Tibial artery (tissue), 4 donors: ENCODE measurements at regions of chr4 and their contacts with region 1.

Region 1: DNA sequence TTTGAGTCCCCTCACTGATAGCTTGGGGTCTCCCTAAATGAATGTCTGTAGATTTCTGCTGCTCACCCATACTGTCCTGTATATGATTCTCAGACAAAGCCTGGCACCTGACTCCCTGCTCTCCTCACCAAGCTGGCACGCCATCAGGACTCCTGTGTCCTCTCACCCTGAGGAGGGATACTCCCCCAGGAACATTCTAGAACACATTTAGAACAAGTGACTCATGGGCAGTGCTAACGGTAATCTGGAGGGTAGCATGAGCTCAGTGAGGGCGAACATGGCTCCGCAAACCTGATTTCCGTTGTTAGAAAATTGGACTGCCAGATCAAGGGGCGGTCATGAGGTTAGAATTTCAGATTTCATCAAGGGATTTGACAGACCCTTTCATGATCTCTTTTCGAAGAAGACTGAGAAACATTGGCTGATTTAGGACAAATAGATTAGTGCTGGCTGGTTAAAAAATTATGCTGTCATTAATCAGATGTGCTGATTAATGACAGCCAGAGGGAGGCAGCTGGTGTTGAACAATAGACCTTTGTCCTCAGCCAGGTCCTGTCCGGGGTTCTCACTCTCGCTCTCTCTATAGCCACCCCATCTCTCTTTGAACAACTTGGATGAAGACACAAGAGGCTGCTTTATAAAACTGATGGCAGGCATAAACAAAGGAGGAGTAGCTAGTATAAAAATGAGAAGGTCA is 244.3 kb downstream of the PTTG2 start:
- DNase-seq: no peak
- H3K4me3 ChIP-seq: no peak overlapping the region
- H3K27ac ChIP-seq: peak overlapping the region in 1 of 2 donors; percentile 48
- H3K4me1 ChIP-seq: peaks cover 0 to 16% (median 0%) of the 10 kb centered on the region in 4 donors
- H3K27me3 ChIP-seq: no peaks in the 10 kb centered on the region
- CTCF ChIP-seq: no peak

Region 2: DNA sequence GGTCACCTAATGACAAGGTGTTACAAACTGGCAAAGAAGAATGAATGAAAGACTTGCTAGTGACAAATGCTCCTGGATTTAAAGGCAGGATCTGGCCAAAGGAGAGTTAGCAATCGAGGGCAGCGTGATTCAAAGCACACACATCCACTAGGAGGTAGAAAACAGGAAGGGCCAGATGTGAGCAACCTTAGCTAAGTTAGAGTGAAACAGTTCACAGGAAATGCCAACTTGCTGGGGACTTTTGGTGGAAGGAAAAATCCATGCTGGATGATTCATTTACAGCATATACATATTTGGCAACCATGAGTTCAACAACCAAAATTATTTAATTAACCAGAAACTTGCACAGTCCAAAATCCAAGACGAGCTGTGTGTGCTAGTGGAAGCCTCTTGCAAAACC is 32.7 kb after region 1 on chr4:
- intact Hi-C with region 1: loop called (anchors 2 kb)
- DNase-seq: no peak
- H3K4me3 ChIP-seq: no peak overlapping the region
- H3K27ac ChIP-seq: no peak overlapping the region
- H3K4me1 ChIP-seq: peaks cover 0 to 24% (median 5%) of the 10 kb centered on the region in 4 donors
- H3K27me3 ChIP-seq: no peaks in the 10 kb centered on the region
- CTCF ChIP-seq: no peak

Region 3: GRCh38 chr4:38343608-38344007 is 139.1 kb after region 1 on chr4:
- intact Hi-C with region 1: no loop called
- DNase-seq: no peak
- H3K4me3 ChIP-seq: no peak overlapping the region
- H3K27ac ChIP-seq: no peak overlapping the region
- H3K4me1 ChIP-seq: no peaks in the 10 kb centered on the region
- H3K27me3 ChIP-seq: no peaks in the 10 kb centered on the region
- CTCF ChIP-seq: no peak